Left cardiac atrium (tissue), 4 donors: ENCODE measurements at regions of chr2 and their contacts with region 1.

Region 1: DNA sequence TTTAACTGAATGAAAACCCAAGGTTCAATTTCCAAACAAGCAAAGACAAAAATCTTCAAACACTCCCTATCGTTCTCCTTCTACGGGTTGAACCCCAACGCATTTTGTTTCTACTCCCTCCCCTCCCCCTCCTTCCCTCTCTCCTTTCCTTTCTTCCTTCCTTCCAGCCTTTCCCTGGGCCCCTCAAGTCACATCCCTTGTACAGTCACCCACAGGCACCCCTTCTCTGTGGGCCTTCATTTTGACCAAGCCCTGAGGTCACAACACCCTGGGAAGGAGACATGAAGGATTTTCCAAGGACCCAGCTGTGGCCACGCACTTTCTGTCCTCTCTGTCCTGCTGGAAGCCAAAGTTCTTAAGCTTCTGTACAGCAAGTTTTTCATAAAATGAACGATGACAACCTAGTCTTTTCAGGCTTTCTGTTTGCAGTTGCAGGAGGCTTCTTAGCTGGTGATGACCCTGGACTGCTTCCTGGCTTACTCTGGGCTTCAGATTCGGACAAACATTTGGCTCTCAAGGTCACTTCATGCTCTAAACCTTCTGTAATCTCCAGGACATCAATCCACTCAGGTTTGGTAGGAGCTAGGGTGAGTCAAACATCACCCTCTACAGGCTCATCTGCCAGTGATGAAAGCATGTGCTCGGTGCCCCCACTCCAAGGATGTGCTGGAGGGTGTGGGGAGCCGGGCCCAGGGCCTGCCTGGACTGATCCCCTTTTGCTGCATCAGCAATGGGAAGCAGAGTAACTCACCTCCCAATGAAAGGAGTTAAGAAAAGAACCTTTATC is 25.5 kb downstream of the TMEM247 start:
- DNase-seq: no peak
- ATAC-seq: no peak

Region 2: DNA sequence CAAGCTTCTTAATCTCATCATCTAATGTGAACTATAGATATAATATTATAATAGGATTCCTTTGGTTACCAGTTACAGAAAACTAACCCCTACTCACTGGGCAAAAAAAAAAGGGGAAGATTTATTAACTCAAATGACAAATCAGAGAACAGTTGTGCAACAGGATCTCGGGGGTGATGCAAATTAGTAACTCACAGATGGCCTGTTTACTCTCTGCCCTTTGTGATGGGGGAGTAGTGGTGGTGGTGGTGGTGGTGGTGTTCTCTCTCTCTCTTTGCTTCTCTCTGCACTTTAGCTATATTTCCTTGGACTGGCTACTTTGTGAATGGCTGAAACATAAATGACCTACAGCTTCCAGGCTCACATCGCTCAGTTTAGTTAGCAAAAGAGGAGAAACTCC is 33.5 kb after region 1 on chr2:
- intact Hi-C with region 1: loop called in 1 of 2 experiments (anchors 2 kb)
- DNase-seq: no peak
- ATAC-seq: no peak

Region 3: DNA sequence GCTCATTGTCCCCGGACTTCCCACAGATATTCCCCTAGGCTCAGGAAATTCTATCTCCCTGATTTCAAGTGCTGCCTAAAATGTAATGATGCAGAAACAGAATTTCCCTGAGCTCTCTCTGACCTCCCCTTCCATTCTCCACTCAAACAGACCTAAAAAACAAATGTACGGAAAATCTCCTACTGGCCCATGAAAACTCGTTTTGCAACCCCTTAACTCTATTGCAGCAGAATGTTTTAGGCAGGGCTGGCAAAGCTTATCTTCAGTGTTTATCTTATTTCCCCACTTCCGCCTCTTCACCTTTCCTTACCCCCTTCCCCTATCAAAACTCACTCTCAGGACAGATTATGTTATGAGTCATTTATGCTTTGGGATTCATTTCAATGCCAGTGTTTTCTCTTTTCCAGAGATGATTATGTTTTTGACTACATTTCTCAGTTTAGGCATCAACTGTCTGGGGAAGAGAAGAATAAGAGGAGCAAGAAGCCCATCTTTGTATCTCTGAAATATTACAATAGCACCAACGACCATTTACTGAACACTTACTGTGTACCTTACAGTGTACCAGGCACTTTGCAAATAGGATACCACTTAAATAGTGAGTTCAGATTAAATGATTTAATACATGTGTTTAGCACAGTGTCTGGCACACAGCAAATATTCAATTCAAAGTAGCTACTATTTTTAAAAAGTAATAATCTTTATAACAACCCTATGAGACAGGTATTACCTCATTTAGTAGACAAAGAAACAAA is 704.2 kb after region 1 on chr2:
- intact Hi-C with region 1: no loop called
- DNase-seq: no peak
- ATAC-seq: peak in 1 of 2 donors; percentile 37